ENCODE measurements at regions of chr19 and their contacts with region 1.

Region 1: GRCh38 chr19:6218491-6219162 is 61.1 kb downstream of the MLLT1 start:
- DNase-seq: peak; percentile 80 to 92 (median 87)
- H3K4me3 ChIP-seq: no peak overlapping the region
- H3K27ac ChIP-seq: no peak overlapping the region
- H3K4me1 ChIP-seq: peaks cover 0 to 5% (median 0%) of the 10 kb centered on the region in 4 experiments
- H3K27me3 ChIP-seq: no peaks in the 10 kb centered on the region

Region 2: DNA sequence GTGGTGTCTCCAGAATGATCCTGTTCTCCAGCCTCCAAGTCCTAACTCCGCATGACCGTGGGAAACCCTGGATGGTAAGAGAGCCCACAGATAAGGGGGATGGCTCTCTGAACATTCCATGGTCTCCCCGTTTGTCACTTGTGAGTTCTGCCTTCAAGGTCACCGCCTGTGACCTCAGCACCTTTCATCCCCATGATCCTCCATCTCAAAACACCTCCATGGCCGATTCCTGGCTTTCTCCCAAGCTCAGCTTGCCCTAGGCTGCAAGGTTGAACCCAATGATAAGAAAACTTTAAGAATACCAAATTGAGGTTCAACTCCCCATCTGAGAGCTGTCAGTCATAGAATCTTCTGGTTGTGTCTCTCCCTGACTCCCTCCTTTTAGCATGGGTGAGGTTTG is 35.3 kb before region 1 on chr19:
- CTCF ChIA-PET with region 1: no interaction called
- POLR2A ChIA-PET with region 1: no interaction called
- DNase-seq: no peak
- H3K4me3 ChIP-seq: no peak overlapping the region
- H3K27ac ChIP-seq: no peak overlapping the region
- H3K4me1 ChIP-seq: peaks cover 0 to 2% (median 0%) of the 10 kb centered on the region in 4 experiments
- H3K27me3 ChIP-seq: no peaks in the 10 kb centered on the region

Region 3: DNA sequence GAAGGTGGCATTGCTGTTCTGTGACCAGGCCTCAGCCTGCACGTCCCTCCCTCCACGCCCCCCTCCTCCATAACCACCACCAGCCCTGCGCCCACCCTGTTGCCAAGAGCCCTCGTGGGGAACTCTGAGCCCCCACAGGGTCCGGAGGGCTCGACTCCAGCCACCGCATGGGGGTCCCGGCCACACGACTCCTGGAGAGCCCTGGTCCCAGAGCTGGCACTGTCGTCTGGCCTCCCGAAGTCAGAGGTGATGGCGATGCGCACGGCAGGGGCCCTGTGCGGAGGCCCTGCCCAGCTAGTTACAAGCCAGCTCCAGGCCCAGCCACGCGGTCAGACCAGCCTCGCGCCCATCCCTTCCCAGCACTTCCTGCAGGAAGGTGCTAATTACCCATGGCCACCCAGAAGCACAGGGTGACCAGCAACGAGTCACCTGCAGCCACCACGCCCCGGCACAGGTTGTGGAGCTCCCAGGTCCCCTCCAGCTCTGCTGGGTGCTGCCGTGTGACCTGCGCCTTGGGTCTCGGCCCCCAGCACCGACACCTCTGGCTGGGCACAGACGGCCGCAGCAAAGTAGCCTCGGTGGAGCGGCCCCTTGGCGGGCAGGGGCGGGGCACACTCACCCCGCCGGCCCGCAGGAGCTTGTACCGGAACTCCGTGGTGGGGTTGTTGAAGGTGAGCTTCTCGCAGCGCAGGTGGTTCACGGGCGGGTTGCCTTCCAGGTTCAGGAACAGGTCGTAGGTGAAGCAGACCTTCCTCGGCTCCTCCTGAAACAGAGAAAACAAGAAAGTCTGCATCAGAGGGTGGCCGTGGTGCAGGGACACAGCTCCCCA is 11.5 kb after region 1 on chr19:
- CTCF ChIA-PET with region 1: interaction called, 17 read pairs
- POLR2A ChIA-PET with region 1: interaction called, 4 read pairs
- DNase-seq: no peak
- H3K4me3 ChIP-seq: no peak overlapping the region
- H3K27ac ChIP-seq: no peak overlapping the region
- H3K4me1 ChIP-seq: peaks cover 0 to 25% (median 25%) of the 10 kb centered on the region in 4 experiments
- H3K27me3 ChIP-seq: no peaks in the 10 kb centered on the region

Region 4: GRCh38 chr19:6260912-6261650 is 42.5 kb after region 1 on chr19:
- CTCF ChIA-PET with region 1: interaction called, 10 read pairs
- POLR2A ChIA-PET with region 1: no interaction called
- DNase-seq: peak in 1 of 3 donors; percentile 51
- H3K4me3 ChIP-seq: no peak overlapping the region
- H3K27ac ChIP-seq: no peak overlapping the region
- H3K4me1 ChIP-seq: peaks cover 0 to 4% (median under 1%) of the 10 kb centered on the region in 4 experiments
- H3K27me3 ChIP-seq: no peaks in the 10 kb centered on the region

Region 5: GRCh38 chr19:6292006-6292405 is 73.4 kb after region 1 on chr19:
- CTCF ChIA-PET with region 1: interaction called, 20 read pairs
- POLR2A ChIA-PET with region 1: no interaction called
- DNase-seq: peak; percentile 20 to 28 (median 26)
- H3K4me3 ChIP-seq: no peak overlapping the region
- H3K27ac ChIP-seq: no peak overlapping the region
- H3K4me1 ChIP-seq: no peaks in the 10 kb centered on the region
- H3K27me3 ChIP-seq: no peaks in the 10 kb centered on the region